HepG2 (cell line): ENCODE measurements at regions of chr3 and their contacts with region 1.

Region 1: DNA sequence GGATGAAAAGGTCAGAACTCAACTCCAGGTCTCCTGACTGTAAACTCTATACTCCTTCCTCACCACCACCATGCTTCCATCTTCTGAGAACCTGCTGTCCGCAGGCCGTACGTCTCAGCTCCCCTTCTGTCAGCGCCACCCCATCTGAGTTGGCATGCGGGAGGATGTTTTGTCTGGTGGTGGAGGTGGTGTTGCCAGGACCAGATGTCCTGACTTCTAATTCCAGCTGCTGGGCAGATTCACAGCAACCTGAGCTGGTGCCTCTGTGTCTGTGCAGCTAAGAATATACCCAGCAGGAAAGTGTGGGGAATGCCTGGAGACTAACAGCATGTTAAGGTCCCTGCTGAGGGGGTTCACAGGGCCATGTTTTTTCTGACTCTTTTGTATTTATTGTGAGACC is 23.2 kb downstream of the PLA1A start:
- DNase-seq: no peak
- ATAC-seq: no peak
- H3K4me3 ChIP-seq: no peak overlapping the region
- H3K27ac ChIP-seq: no peak overlapping the region
- H3K4me1 ChIP-seq: no peaks in the 10 kb centered on the region
- H3K27me3 ChIP-seq: peaks cover 2 to 10% of the 10 kb centered on the region in 2 experiments; a peak in 2 of 5 replicates
- CTCF ChIP-seq: no peak
- EP300 ChIP-seq: no peak
- POLR2A ChIP-seq: no peak
- RAD21 ChIP-seq: no peak

Region 2: DNA sequence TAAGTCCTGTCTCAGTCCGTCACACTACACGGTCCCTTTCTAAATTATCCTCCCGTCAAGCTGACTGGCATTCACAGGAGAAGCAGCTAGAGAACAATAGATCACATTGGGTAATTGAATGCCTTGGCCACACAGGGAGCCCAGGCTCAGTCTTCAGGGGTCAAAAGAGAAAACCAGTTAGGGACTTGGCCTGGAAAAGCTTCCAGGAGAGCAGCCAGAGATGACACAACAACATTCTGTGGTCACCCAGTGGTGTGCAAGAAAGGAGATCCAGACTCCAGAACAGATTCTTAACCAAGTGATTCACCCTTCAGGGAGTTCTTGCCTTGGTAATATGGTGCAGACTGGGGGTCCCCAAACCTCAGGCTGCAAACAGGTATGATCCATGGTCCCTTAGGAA is 310.8 kb before region 1 on chr3:
- CTCF ChIA-PET with region 1: no interaction called
- POLR2A ChIA-PET with region 1: no interaction called
- in situ Hi-C with region 1: no loop called
- intact Hi-C with region 1: loop called (anchors 5 kb)
- DNase-seq: no peak
- ATAC-seq: no peak
- H3K4me3 ChIP-seq: no peak overlapping the region
- H3K27ac ChIP-seq: no peak overlapping the region
- H3K4me1 ChIP-seq: no peaks in the 10 kb centered on the region
- H3K27me3 ChIP-seq: no peaks in the 10 kb centered on the region; a peak in 2 of 5 replicates
- CTCF ChIP-seq: no peak
- EP300 ChIP-seq: no peak
- POLR2A ChIP-seq: no peak
- RAD21 ChIP-seq: no peak

Region 3: GRCh38 chr3:119662604-119663373 is 41.9 kb after region 1 on chr3:
- CTCF ChIA-PET with region 1: no interaction called
- POLR2A ChIA-PET with region 1: no interaction called
- in situ Hi-C with region 1: no loop called
- intact Hi-C with region 1: no loop called
- DNase-seq: no peak
- ATAC-seq: no peak
- H3K4me3 ChIP-seq: no peak overlapping the region
- H3K27ac ChIP-seq: no peak overlapping the region
- H3K4me1 ChIP-seq: no peaks in the 10 kb centered on the region
- H3K27me3 ChIP-seq: no peaks in the 10 kb centered on the region
- CTCF ChIP-seq: no peak
- EP300 ChIP-seq: no peak
- POLR2A ChIP-seq: no peak
- RAD21 ChIP-seq: no peak